CD4-positive, alpha-beta T cell (primary cell): ENCODE measurements at regions of chr7 and their contacts with region 1.

Region 1: DNA sequence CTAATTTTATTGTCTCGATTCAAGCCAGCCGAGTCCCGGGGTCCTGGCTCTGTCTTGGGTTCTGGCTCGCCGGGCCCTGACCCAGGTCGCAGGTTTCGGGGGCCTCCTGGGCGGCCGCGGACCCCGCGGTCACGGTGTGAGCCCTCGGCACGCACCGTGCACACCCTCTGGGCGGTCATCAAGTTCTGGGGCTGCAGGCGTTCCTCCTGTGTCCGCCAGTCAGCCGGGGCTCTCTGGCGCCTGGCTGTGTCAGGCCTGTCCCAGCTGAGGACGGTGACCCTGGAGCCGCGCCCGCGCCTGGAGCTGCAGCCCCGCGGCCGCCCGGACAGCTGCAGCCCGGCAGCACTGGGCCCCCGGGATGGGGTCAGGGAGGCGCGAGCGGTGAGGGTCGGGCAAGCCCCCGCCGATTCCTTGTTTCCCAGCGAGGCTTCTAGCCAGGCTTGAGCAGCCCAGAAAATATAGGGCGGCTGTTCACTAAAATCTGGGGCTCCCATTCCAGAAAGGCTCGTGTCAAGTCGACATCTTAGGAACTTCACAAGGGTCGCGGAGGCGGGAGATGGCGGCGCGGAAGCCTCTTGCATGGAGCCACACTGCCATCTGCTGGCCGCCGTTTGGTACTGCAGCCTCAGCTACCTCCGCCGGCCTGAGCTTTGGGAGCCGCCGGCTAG is 4.2 kb upstream of the HOXA7 start:
- DNase-seq: peak; percentile 72 to 92 (median 80)
- ATAC-seq: peak; percentile 81
- H3K4me3 ChIP-seq: peak overlapping the region; percentile 60
- H3K4me3 Mint-ChIP-seq: peak overlapping the region; percentile 87
- H3K27ac ChIP-seq: no peak overlapping the region
- H3K27ac Mint-ChIP-seq: peak overlapping the region; percentile 42
- H3K4me1 ChIP-seq: peaks cover 57% of the 10 kb centered on the region
- H3K4me1 Mint-ChIP-seq: peaks cover 46% of the 10 kb centered on the region
- H3K27me3 ChIP-seq: peaks cover 82 to 94% of the 10 kb centered on the region in 2 experiments
- H3K27me3 Mint-ChIP-seq: peaks cover 93% of the 10 kb centered on the region
- CTCF ChIP-seq: peak; percentile 100

Region 2: GRCh38 chr7:25851332-25852210 is 1309.1 kb before region 1 on chr7:
- CTCF ChIA-PET with region 1: no interaction called
- POLR2A ChIA-PET with region 1: no interaction called
- intact Hi-C with region 1: loop called in 1 of 2 experiments (anchors 5 kb)
- DNase-seq: peak in 13 of 14 experiments; percentile 29 to 76 (median 45)
- ATAC-seq: peak; percentile 63
- H3K4me3 ChIP-seq: no peak overlapping the region
- H3K4me3 Mint-ChIP-seq: peak overlapping the region; percentile 77
- H3K27ac ChIP-seq: no peak overlapping the region
- H3K27ac Mint-ChIP-seq: peak overlapping the region; percentile 56
- H3K4me1 ChIP-seq: peaks cover 32% of the 10 kb centered on the region
- H3K4me1 Mint-ChIP-seq: peaks cover 29% of the 10 kb centered on the region
- H3K27me3 ChIP-seq: peaks cover 61 to 67% of the 10 kb centered on the region in 2 experiments
- H3K27me3 Mint-ChIP-seq: peaks cover 46% of the 10 kb centered on the region
- CTCF ChIP-seq: peak; percentile 64

Region 3: DNA sequence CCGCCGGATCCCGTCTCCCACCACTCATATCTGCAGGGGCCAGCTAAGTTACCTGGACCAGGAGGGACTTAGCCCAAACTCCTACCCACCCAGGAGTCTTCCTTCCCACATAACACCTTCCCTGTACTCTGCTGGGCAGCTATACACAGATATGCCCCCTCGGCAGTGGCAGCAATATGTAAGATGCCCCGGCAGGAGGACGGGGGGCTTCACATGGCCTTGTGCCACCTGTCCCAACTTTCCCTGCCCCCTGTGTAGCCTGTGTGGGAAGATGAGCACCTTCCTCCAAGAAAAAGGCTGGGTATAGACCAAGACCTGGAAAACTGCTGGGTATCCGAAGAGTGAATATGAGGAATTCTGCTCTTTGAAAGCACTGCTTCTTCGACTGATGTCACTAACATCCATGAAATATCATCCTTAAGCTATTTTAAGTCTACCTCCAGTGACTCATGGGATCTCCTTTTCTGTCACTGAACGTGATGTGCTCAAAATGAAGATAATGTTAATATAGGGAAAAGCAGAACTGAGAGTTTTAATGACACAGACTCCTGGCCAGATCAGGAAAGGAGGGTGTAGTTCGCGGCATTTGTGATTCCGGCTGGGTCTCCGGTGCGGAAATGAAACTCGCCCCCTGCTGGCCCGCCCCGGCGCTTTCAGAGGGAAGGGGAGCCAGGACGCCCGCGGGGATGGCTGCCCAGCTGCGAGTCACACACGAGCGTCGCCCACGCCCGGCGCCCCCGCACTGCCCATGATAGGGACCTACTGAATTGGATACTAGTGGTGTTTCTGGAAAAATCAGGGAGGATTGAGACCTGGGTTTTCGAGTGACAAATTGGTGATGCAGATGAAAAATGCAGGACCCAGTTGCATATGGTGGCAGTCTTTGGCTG is 1265.5 kb before region 1 on chr7:
- CTCF ChIA-PET with region 1: interaction called, 12 read pairs
- POLR2A ChIA-PET with region 1: interaction called, 3 read pairs
- intact Hi-C with region 1: loop called in 1 of 2 experiments (anchors 1 kb)
- DNase-seq: peak; percentile 38 to 80 (median 56)
- ATAC-seq: peak; percentile 54
- H3K4me3 ChIP-seq: peak overlapping the region; percentile 9
- H3K4me3 Mint-ChIP-seq: peak overlapping the region; percentile 49
- H3K27ac ChIP-seq: no peak overlapping the region
- H3K27ac Mint-ChIP-seq: no peak overlapping the region
- H3K4me1 ChIP-seq: peaks cover 25% of the 10 kb centered on the region
- H3K4me1 Mint-ChIP-seq: peaks cover 31% of the 10 kb centered on the region
- H3K27me3 ChIP-seq: no peaks in the 10 kb centered on the region
- H3K27me3 Mint-ChIP-seq: no peaks in the 10 kb centered on the region
- CTCF ChIP-seq: peak; percentile 79

Region 4: DNA sequence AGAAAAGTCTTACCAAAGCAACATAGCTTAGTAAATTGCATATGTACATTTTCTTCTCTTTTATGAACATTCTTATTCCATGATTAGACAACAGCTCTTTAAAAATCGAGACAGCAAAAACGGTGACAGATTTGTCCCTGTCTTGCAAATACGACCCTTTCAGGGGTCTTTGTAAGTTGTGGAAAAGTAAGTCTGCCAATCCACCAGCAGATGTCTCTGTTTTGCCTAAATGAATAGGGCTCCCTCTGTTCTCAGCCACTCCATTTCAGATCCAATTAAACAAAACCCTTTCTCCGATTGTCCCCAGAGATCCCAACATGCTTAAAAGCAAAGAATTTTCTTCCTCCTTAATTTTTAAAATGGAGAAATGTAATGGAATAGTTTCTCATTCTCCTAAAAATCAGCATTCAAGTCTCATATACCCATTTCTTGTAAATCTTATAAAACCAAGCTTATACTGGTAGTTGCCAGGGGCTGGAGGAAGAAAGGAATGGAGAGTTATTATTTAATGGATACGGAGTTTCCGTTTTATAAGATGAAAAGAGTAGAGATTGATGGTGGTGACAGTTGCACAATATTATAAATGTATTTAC is 1069.7 kb before region 1 on chr7:
- CTCF ChIA-PET with region 1: interaction called, 4 read pairs
- POLR2A ChIA-PET with region 1: no interaction called
- intact Hi-C with region 1: loop called (anchors 10 kb)
- DNase-seq: peak in 4 of 14 experiments; percentile 31 to 73 (median 64)
- ATAC-seq: peak; percentile 71
- H3K4me3 ChIP-seq: no peak overlapping the region
- H3K4me3 Mint-ChIP-seq: no peak overlapping the region
- H3K27ac ChIP-seq: no peak overlapping the region
- H3K27ac Mint-ChIP-seq: no peak overlapping the region
- H3K4me1 ChIP-seq: peaks cover 7% of the 10 kb centered on the region
- H3K4me1 Mint-ChIP-seq: peaks cover 40% of the 10 kb centered on the region
- H3K27me3 ChIP-seq: no peaks in the 10 kb centered on the region
- H3K27me3 Mint-ChIP-seq: no peaks in the 10 kb centered on the region
- CTCF ChIP-seq: peak; percentile 92

Region 5: DNA sequence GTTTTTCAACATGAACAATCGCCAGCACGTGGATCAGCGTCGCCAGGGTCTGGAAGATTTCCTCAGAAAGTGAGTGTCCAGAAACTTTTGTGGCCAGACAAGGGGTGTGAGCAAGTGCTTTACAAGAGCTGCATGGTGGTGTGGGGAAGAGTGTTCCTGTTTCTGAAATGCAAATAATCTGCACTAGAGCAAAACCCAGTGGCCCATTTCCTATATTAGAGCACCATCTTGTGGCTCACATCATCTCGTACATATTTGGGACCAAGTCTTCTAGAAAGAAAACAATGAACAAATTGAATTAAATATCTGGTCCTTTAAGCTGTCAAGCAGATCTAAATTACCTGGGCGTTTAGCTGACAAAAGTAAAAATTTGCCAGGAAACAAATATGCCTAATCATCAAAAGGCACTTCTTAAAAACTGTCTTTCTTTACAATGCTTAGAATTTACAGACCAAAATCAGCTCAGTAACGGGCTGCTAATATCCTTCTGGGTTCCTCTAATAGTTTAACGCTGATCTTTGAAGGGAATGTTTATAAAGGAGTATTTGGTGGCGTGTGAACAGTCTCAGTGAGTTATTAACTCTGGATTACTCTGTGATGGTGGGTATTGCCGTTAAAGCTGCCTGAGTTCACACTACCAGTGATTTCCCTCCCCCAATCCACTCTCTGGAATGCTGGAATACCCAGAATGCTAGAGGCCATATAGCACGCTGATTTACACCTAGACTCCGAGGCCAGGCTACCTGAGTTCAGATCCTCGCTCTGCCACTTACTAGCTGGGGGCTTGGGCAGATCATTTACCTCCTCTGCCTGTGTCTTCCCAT is 795.4 kb before region 1 on chr7:
- CTCF ChIA-PET with region 1: interaction called, 22 read pairs
- POLR2A ChIA-PET with region 1: interaction called, 4 read pairs
- intact Hi-C with region 1: loop called (anchors 1 kb)
- DNase-seq: peak; percentile 16 to 84 (median 34)
- ATAC-seq: peak; percentile 86
- H3K4me3 ChIP-seq: no peak overlapping the region
- H3K4me3 Mint-ChIP-seq: no peak overlapping the region
- H3K27ac ChIP-seq: no peak overlapping the region
- H3K27ac Mint-ChIP-seq: no peak overlapping the region
- H3K4me1 ChIP-seq: peaks cover 2% of the 10 kb centered on the region
- H3K4me1 Mint-ChIP-seq: peaks cover 13% of the 10 kb centered on the region
- H3K27me3 ChIP-seq: no peaks in the 10 kb centered on the region
- H3K27me3 Mint-ChIP-seq: no peaks in the 10 kb centered on the region
- CTCF ChIP-seq: peak; percentile 83

Region 6: GRCh38 chr7:26686448-26686981 is 474.2 kb before region 1 on chr7:
- CTCF ChIA-PET with region 1: interaction called, 20 read pairs
- POLR2A ChIA-PET with region 1: interaction called, 8 read pairs
- intact Hi-C with region 1: loop called in 1 of 2 experiments (anchors 1 kb)
- DNase-seq: peak in 4 of 14 experiments; percentile 7 to 65 (median 50)
- ATAC-seq: peak; percentile 54
- H3K4me3 ChIP-seq: no peak overlapping the region
- H3K4me3 Mint-ChIP-seq: no peak overlapping the region
- H3K27ac ChIP-seq: no peak overlapping the region
- H3K27ac Mint-ChIP-seq: no peak overlapping the region
- H3K4me1 ChIP-seq: no peaks in the 10 kb centered on the region
- H3K4me1 Mint-ChIP-seq: no peaks in the 10 kb centered on the region
- H3K27me3 ChIP-seq: peaks cover 0 to 8% of the 10 kb centered on the region in 2 experiments
- H3K27me3 Mint-ChIP-seq: peaks cover 76% of the 10 kb centered on the region
- CTCF ChIP-seq: peak; percentile 84

Region 7: DNA sequence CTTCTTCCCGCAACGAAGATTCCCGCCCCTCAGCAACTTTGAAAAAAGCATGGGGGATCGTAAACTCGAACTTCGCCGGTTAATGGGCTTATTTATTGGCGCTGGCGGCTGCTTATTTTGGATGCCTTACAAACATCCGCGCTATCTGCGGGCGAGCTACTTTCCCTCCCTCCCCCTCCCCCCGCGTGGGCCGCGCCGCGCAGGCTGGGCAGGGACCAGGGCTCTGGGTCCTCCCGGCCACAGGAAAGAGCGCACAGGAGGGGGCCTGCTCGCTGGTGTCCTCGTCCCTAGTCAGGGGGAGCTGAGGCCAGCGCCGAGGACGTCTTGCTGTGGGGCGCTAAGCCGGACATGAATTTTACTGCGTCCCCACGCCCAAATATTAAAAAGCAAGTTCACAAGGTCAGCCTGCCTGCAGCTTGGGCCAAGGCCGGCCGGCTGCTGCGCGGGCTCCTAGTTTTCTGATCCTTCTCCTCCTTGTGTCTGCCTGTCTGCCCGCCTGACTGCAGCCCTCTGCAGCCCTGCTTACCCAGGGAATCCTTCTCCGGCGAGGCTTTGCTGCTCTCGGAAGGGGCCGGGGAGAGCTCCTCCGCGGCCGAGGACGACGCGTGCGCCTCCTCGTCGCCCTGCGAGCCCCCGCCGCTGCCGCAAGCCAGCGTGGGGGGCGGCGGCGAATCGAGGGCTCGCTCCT is 12.3 kb after region 1 on chr7:
- CTCF ChIA-PET with region 1: interaction called, 10 read pairs
- POLR2A ChIA-PET with region 1: interaction called, 6 read pairs
- intact Hi-C with region 1: no loop called
- DNase-seq: peak in 3 of 14 experiments; percentile 18 to 38 (median 25)
- ATAC-seq: peak; percentile 24
- H3K4me3 ChIP-seq: peak overlapping the region; percentile 34
- H3K4me3 Mint-ChIP-seq: no peak overlapping the region
- H3K27ac ChIP-seq: no peak overlapping the region
- H3K27ac Mint-ChIP-seq: no peak overlapping the region
- H3K4me1 ChIP-seq: peaks cover 59% of the 10 kb centered on the region
- H3K4me1 Mint-ChIP-seq: peaks cover 39% of the 10 kb centered on the region
- H3K27me3 ChIP-seq: peaks cover 78 to 96% of the 10 kb centered on the region in 2 experiments
- H3K27me3 Mint-ChIP-seq: peaks cover 84% of the 10 kb centered on the region
- CTCF ChIP-seq: no peak